Natural killer cell (primary cell): ENCODE measurements at regions of chr1 and their contacts with region 1.

Region 1: DNA sequence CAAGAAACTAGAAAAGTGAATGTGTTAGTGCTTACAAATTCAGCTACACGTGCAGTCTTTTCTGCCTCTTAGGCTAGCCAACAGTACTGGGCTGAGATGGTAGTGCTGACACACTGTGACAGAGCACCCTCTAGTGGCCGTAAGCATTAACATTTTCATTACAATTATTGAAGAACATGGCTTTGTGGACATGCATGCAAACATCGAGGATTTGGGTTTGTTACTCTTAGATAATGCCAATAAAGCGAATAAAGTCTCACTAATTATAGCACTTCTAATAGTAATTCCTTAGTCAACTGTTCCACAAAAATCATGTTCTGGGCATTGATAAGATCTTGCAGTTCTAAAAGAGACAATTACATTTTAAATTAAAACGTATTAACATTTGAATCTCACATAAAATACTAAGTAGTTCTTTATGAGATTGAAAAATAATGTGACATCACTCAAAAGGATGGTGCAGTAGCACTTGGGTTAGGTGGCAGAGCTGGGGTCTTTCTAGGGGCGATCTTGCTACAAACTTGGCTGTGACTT is 47.1 kb downstream of the MYSM1 start:
- DNase-seq: peak; percentile 27 to 87
- ATAC-seq: peak; percentile 93 to 94 (median 94)
- H3K4me3 ChIP-seq: no peak overlapping the region
- H3K4me3 Mint-ChIP-seq: no peak overlapping the region
- H3K27ac ChIP-seq: no peak overlapping the region
- H3K27ac Mint-ChIP-seq: peak overlapping the region in 1 of 2 donors; percentile 43
- H3K4me1 ChIP-seq: peaks cover 9% of the 10 kb centered on the region
- H3K4me1 Mint-ChIP-seq: peaks cover 32 to 34% of the 10 kb centered on the region in 2 donors
- H3K27me3 ChIP-seq: no peaks in the 10 kb centered on the region
- H3K27me3 Mint-ChIP-seq: no peaks in the 10 kb centered on the region
- CTCF ChIP-seq: peak; percentile 82

Region 2: GRCh38 chr1:58515794-58516401 is 136.8 kb before region 1 on chr1:
- intact Hi-C with region 1: loop called (anchors 1 kb)
- DNase-seq: peak in 1 of 2 donors; percentile 84
- ATAC-seq: peak; percentile 61 to 73 (median 70)
- H3K4me3 ChIP-seq: no peak overlapping the region
- H3K4me3 Mint-ChIP-seq: no peak overlapping the region
- H3K27ac ChIP-seq: no peak overlapping the region
- H3K27ac Mint-ChIP-seq: peak overlapping the region in 1 of 2 donors; percentile 79
- H3K4me1 ChIP-seq: no peaks in the 10 kb centered on the region
- H3K4me1 Mint-ChIP-seq: peaks cover 0 to 7% of the 10 kb centered on the region in 2 donors
- H3K27me3 ChIP-seq: no peaks in the 10 kb centered on the region
- H3K27me3 Mint-ChIP-seq: no peaks in the 10 kb centered on the region
- CTCF ChIP-seq: peak; percentile 83

Region 3: GRCh38 chr1:58546520-58547308 is 106.0 kb before region 1 on chr1 and contains the start of gene OMA1:
- intact Hi-C with region 1: loop called (anchors 1 kb)
- DNase-seq: peak; percentile 98 to 99
- ATAC-seq: peak; percentile 91 to 99 (median 92)
- H3K4me3 ChIP-seq: peak within 1 kb of the TSS; percentile 53
- H3K4me3 Mint-ChIP-seq: peak within 1 kb of the TSS; percentile 94
- H3K27ac ChIP-seq: peak within 1 kb of the TSS; percentile 99
- H3K27ac Mint-ChIP-seq: peak within 1 kb of the TSS; percentile 93 to 98
- H3K4me1 ChIP-seq: peaks cover 10% of the 10 kb centered on the region
- H3K4me1 Mint-ChIP-seq: peaks cover 19 to 34% of the 10 kb centered on the region in 2 donors
- H3K27me3 ChIP-seq: no peaks in the 10 kb centered on the region
- H3K27me3 Mint-ChIP-seq: peaks cover 5 to 17% of the 10 kb centered on the region in 2 donors
- CTCF ChIP-seq: peak; percentile 88
- total RNA-seq, gene OMA1: 27.2 to 41.1 (median 31.2) TPM

Region 4: GRCh38 chr1:59699227-59699847 is 1046.6 kb after region 1 on chr1:
- intact Hi-C with region 1: loop called (anchors 2 kb)
- DNase-seq: peak in 1 of 2 donors; percentile 74
- ATAC-seq: peak; percentile 68 to 78 (median 76)
- H3K4me3 ChIP-seq: no peak overlapping the region
- H3K4me3 Mint-ChIP-seq: peak overlapping the region; percentile 43
- H3K27ac ChIP-seq: no peak overlapping the region
- H3K27ac Mint-ChIP-seq: no peak overlapping the region
- H3K4me1 ChIP-seq: peaks cover 5% of the 10 kb centered on the region
- H3K4me1 Mint-ChIP-seq: peaks cover 20 to 23% of the 10 kb centered on the region in 2 donors
- H3K27me3 ChIP-seq: no peaks in the 10 kb centered on the region
- H3K27me3 Mint-ChIP-seq: no peaks in the 10 kb centered on the region
- CTCF ChIP-seq: peak; percentile 100